Mammary epithelial cell (primary cell): ENCODE measurements at regions of chr5 and their contacts with region 1.

Region 1: DNA sequence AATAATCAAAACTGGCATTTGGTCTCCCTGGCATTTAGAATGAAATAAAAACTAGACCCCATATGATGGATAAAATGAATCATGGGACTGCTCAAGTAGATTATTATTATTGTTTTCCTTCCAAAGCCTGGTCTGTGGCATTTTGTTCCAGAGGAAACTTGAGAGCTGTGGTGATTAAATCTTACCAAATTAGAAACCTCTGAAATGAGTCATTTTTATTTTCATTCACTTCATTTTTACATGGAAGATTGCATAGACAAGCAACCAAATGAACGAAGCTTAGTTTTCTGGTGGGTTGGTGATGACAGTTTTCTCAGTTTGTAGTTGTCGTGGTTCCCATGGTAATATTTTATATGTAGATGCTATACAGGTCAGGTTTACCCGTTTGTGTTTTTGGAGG is 23.4 kb downstream of the PAM start:
- DNase-seq: peak; percentile 78
- H3K4me3 ChIP-seq: no peak overlapping the region
- H3K27ac ChIP-seq: peak overlapping the region; percentile 37
- H3K4me1 ChIP-seq: peaks cover 12% of the 10 kb centered on the region
- H3K27me3 ChIP-seq: no peaks in the 10 kb centered on the region
- CTCF ChIP-seq: no peak

Region 2: GRCh38 chr5:102755686-102756371 is 22.6 kb before region 1 on chr5:
- CTCF ChIA-PET with region 1: interaction called, 3 read pairs
- dilution Hi-C with region 1: no loop called
- in situ Hi-C with region 1: no loop called
- intact Hi-C with region 1: loop called (anchors 2 kb)
- DNase-seq: peak; percentile 89
- H3K4me3 ChIP-seq: peak overlapping the region; percentile 79 to 88 (median 85)
- H3K27ac ChIP-seq: peak overlapping the region; percentile 92
- H3K4me1 ChIP-seq: peaks cover 27% of the 10 kb centered on the region
- H3K27me3 ChIP-seq: no peaks in the 10 kb centered on the region
- CTCF ChIP-seq: peak in 1 of 2 donors; percentile 16

Region 3: GRCh38 chr5:102889033-102889432 is 110.6 kb after region 1 on chr5:
- CTCF ChIA-PET with region 1: no interaction called
- dilution Hi-C with region 1: no loop called
- in situ Hi-C with region 1: no loop called
- intact Hi-C with region 1: no loop called
- DNase-seq: no peak
- H3K4me3 ChIP-seq: no peak overlapping the region
- H3K27ac ChIP-seq: no peak overlapping the region
- H3K4me1 ChIP-seq: no peaks in the 10 kb centered on the region
- H3K27me3 ChIP-seq: no peaks in the 10 kb centered on the region
- CTCF ChIP-seq: no peak

Region 4: DNA sequence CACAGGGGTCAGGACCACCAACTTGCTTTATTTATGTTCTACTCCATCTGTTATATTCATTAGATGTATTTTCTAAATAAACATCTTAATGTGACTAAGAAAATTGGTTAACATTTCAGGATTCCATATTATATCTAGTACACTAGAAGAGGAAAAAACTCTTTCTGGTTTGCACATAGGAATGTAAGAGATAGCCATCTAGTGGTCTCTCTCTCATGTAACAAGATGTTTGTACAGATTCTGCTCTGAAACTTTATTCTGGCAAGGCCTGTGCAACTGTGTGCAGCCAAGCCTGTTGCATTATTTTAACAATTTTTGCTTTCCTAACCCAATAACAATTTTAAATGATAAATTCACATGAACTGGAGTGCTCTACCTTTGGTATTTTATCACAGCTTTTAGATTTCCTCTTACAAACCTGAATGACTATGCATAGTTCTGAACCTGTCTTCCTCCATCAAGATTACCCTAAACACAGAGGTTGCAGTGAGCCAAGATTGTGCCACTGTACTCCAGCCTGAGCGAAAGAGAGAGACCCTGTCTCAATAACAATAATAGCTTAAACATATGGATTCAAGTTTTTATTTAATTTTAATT is 193.3 kb after region 1 on chr5:
- CTCF ChIA-PET with region 1: no interaction called
- dilution Hi-C with region 1: no loop called
- in situ Hi-C with region 1: no loop called
- intact Hi-C with region 1: loop called (anchors 1 kb)
- DNase-seq: peak; percentile 9
- H3K4me3 ChIP-seq: no peak overlapping the region
- H3K27ac ChIP-seq: no peak overlapping the region
- H3K4me1 ChIP-seq: no peaks in the 10 kb centered on the region
- H3K27me3 ChIP-seq: no peaks in the 10 kb centered on the region
- CTCF ChIP-seq: peak; percentile 31 to 53

Region 5: DNA sequence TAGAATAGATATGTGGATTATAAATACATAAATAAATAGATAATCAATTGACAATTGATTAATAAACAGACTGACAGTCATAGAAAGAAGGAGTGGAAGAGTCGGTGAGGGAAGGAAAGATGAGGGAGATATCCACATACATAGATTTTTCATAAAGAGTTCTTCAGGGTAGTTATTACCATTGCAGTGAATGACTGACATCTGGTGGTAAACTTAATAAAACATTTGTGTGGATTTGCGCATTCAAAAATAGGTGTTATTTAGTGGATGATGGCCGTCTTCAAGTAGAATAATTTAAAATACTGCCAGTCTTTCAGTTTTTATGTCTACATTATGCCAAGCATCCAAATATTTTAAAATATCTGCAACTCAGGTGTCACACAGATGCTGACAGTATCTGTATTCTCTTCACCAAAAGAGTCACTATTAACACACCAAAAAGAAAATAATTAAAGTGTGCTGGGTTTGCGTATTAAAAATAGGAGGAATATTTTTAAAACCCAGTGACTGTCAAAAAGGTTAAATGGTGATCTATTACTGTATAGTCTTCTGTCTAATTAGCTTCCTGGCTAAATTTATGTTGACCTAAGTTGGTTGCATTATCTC is 262.7 kb after region 1 on chr5:
- CTCF ChIA-PET with region 1: no interaction called
- dilution Hi-C with region 1: no loop called
- in situ Hi-C with region 1: no loop called
- intact Hi-C with region 1: loop called (anchors 2 kb)
- DNase-seq: peak; percentile 37
- H3K4me3 ChIP-seq: no peak overlapping the region
- H3K27ac ChIP-seq: no peak overlapping the region
- H3K4me1 ChIP-seq: no peaks in the 10 kb centered on the region
- H3K27me3 ChIP-seq: peaks cover 2% of the 10 kb centered on the region
- CTCF ChIP-seq: peak; percentile 28 to 56

Region 6: DNA sequence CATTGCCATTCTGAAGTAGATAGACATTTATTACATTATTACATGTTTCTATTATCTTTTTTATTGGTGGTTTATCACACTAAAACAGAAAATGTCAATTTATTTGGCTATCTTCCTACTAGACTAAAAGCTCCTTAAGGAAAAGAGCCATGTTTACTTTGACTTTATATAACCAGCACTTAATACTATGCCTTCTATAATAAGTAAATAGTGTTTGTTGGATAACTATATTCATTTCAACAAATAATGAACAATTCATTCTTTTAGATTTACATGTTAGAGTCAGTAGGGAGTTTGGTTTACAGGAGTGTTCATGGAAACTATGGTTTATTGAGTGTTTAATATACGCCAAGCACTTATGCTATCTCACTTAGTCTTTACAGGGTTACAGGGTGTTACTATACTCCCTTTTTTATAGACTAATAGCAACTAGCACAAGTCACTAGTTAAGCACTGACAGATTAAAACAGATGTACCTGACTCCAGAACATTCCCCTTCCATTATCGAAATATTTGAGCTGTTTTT is 348.9 kb after region 1 on chr5:
- CTCF ChIA-PET with region 1: no interaction called
- dilution Hi-C with region 1: no loop called
- in situ Hi-C with region 1: no loop called
- intact Hi-C with region 1: no loop called
- DNase-seq: no peak
- H3K4me3 ChIP-seq: no peak overlapping the region
- H3K27ac ChIP-seq: no peak overlapping the region
- H3K4me1 ChIP-seq: no peaks in the 10 kb centered on the region
- H3K27me3 ChIP-seq: no peaks in the 10 kb centered on the region
- CTCF ChIP-seq: no peak